ENCODE measurements at regions of chr1 and their contacts with region 1.

Region 1: DNA sequence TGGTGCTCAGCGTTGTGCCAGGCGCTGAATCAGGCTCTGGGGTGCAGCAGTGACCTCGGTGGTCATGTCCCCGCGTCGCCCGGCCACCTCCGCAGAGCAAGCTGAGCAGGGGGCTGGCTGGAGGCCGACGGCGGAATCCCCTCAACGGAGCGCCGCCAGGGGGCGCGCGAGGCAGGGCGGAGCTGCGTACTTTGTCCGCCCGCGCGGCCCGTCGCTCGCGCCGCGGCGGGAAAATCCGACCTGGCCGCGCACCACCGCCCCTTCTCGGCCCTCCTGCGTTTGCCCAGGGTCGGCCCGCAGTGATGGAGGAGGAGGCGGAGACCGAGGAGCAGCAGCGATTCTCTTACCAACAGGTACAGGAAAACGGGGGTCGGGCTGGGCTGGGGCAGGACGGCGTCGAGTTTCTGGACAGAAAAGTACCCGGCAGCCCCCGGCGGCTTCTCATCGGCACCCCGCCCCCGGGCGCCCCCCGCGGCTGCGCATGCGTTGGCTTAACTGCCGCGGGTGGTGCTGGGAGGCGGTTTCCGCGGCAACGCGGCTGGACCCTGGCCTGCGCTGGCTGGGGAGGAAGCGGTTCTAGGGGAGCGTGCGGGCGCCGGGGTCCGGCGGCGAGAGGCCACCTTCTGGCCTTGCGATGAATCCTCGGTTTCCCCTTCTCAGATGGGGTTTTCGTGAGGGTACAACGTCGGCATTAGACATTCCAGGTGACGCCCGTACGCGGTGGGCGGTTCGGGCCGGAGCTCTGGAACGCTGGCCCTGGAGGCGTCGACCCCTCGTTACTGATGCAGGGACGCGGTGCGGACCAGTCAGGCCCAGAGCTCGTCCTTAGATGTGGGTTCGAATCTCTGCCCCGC is at the start of gene CENPS:
- DNase-seq: peak; percentile 83 to 87 (median 84)
- H3K4me3 ChIP-seq: peak within 1 kb of the TSS; percentile 37 to 84 (median 67)
- H3K4me3 Mint-ChIP-seq: peak within 1 kb of the TSS; percentile 88 to 92
- H3K27ac ChIP-seq: peak within 1 kb of the TSS; percentile 41 to 54
- H3K27ac Mint-ChIP-seq: peak within 1 kb of the TSS; percentile 72 to 96 (median 91)
- H3K4me1 ChIP-seq: peaks cover 25 to 40% of the 10 kb centered on the region in 2 donors
- H3K4me1 Mint-ChIP-seq: peaks cover 33% of the 10 kb centered on the region
- H3K27me3 ChIP-seq: no peaks in the 10 kb centered on the region
- H3K27me3 Mint-ChIP-seq: peaks cover 0 to 5% (median 1%) of the 10 kb centered on the region in 3 donors
- CTCF ChIP-seq: peak; percentile 99
- polyA plus RNA-seq, gene CENPS: 0.48 to 3.5 (median 2.5) TPM

Region 2: GRCh38 chr1:9606948-9607347 is 823.5 kb before region 1 on chr1:
- intact Hi-C with region 1: no loop called
- DNase-seq: no peak
- H3K4me3 ChIP-seq: no peak overlapping the region
- H3K4me3 Mint-ChIP-seq: no peak overlapping the region
- H3K27ac ChIP-seq: no peak overlapping the region
- H3K27ac Mint-ChIP-seq: no peak overlapping the region
- H3K4me1 ChIP-seq: no peaks in the 10 kb centered on the region
- H3K4me1 Mint-ChIP-seq: no peaks in the 10 kb centered on the region
- H3K27me3 ChIP-seq: no peaks in the 10 kb centered on the region
- H3K27me3 Mint-ChIP-seq: peaks cover 0 to 1% (median 0%) of the 10 kb centered on the region in 3 donors
- CTCF ChIP-seq: no peak

Region 3: DNA sequence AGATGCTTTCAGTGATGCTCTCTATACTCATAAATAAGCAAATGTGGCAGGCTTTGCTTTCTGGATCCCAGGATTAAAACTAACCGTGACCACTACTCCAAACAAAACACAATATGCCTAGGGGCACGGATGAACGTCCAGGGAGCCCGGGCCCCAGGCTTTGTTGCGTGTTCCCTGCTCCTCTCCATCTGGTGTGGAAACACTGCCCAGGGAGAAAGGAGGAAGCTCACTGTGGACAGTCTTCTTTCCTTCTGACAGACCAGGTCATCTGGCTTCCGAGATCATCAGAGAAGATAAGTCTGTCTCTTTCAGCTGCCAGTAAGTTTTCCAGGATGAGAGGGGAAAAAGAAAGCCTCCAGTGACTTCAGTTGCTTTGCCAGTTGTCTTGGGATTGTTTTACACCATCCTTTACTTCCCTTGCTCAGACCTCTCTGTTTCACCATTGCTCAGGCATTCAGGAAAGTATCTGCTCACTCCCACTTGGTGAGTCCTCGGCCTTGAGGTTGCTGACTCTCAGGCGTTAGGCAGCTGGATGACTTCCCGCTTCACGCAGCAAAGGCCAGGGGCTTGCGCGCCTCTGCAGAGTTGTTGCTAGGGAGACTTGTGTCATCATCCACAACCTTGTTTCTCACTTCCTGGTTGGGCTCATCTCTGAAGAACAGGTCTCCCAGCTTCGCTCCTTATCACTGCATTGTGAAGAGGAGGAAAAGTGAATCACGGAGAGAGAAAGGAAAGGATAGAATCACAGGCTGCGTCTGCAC is 52.2 kb before region 1 on chr1:
- intact Hi-C with region 1: loop called (anchors 1 kb)
- DNase-seq: peak; percentile 82 to 90 (median 87)
- H3K4me3 ChIP-seq: peak overlapping the region in 1 of 3 experiments; percentile 15
- H3K4me3 Mint-ChIP-seq: peak overlapping the region in 1 of 2 donors; percentile 27
- H3K27ac ChIP-seq: peak overlapping the region; percentile 71 to 78
- H3K27ac Mint-ChIP-seq: peak overlapping the region; percentile 84 to 95 (median 93)
- H3K4me1 ChIP-seq: peaks cover 22 to 32% of the 10 kb centered on the region in 2 donors
- H3K4me1 Mint-ChIP-seq: peaks cover 36% of the 10 kb centered on the region
- H3K27me3 ChIP-seq: no peaks in the 10 kb centered on the region
- H3K27me3 Mint-ChIP-seq: peaks cover 0 to 2% (median 2%) of the 10 kb centered on the region in 3 donors
- CTCF ChIP-seq: no peak

Region 4: DNA sequence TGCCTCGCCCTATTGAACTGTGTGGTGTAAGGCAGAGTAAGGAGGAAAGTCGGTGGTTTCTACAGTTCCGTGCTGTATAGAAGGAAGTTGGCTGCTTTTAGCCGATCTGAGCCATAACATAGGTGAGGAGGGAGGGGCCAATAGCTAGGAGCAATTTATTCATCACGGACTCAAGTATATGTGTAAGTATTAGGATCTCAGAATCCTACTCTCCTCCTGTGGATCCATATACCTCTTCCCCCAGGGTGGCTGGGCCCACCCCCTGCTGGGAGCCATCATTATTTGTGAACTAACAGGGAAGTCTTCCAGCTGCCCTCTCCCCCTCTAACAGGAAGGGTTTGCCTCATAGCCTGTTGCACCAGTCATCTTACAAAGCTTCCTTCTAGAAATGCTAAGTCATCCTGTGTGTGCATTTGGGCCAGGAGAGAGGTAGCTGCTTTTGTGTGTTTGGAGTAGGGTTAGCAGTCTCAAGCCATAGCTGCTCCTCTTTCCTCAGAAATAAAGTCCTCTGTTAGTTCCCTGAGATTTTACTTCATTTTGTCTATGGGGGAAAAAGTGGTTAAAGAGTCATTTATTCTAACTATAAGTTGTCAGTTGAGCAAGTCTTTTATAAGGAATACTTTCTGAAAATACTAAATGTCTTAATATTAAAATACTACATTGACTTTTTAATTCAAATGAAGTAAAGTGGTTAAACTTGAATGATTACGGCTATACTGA is 15.1 kb before region 1 on chr1:
- intact Hi-C with region 1: loop called in 1 of 2 experiments (anchors 2 kb)
- DNase-seq: peak; percentile 78 to 92 (median 91)
- H3K4me3 ChIP-seq: peak overlapping the region in 2 of 3 experiments; percentile 34 to 61
- H3K4me3 Mint-ChIP-seq: peak overlapping the region; percentile 68 to 87
- H3K27ac ChIP-seq: peak overlapping the region; percentile 76 to 88
- H3K27ac Mint-ChIP-seq: peak overlapping the region; percentile 93 to 99 (median 97)
- H3K4me1 ChIP-seq: peaks cover 33 to 42% of the 10 kb centered on the region in 2 donors
- H3K4me1 Mint-ChIP-seq: peaks cover 33% of the 10 kb centered on the region
- H3K27me3 ChIP-seq: no peaks in the 10 kb centered on the region
- H3K27me3 Mint-ChIP-seq: no peaks in the 10 kb centered on the region
- CTCF ChIP-seq: peak; percentile 11

Region 5: DNA sequence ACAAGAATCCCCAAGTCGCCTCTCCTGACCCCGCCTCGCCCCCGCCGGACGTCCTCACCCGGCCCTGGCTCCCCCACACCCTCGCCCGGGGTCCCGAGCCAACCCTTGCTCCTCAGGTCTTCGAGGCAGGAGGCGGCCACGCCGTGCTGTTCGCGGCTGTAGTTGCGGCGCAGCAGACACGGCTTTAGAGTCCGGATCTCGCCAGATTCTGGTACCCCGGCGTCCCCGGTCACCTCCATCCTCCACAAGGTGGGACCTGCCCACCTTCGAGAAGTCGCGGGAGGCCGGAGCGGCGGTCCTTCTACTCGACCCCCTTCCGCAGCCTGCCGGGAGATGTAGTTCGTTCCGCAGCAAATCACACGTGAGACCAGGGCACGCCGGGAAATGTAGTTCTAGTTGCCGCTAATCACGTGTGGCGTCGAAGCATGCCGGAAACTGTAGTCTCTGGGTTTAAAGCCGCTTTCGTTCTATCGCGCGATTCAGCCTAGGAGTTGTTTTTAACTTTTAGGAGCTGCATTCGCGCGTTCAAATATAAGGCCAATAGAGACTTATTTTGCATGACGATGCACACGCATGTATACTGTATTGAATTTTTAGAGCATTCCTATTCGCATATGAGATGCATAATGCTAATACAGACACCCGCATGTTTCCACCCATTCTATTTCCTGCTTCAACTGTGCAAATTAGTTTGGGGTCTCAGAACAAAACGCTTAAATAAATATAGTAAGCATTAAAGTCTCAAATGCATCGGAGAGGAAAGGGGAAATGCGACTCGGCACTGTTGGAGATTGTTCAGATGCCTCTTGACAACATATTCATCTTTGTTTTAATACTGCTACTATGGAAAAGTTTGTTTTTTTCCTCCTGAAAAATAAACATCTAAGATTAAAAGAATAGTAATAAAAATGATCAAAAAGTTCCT is 42.0 kb after region 1 on chr1 and contains the start of gene DFFA:
- intact Hi-C with region 1: loop called (anchors 2 to 5 kb)
- DNase-seq: peak; percentile 86 to 90 (median 86)
- H3K4me3 ChIP-seq: peak within 1 kb of the TSS; percentile 42 to 93 (median 85)
- H3K4me3 Mint-ChIP-seq: peak within 1 kb of the TSS; percentile 90 to 91
- H3K27ac ChIP-seq: peak within 1 kb of the TSS in 1 of 2 donors; percentile 65
- H3K27ac Mint-ChIP-seq: peak within 1 kb of the TSS in 6 of 7 donors; percentile 53 to 92 (median 79)
- H3K4me1 ChIP-seq: peaks cover 40 to 52% of the 10 kb centered on the region in 2 donors
- H3K4me1 Mint-ChIP-seq: peaks cover 44% of the 10 kb centered on the region
- H3K27me3 ChIP-seq: no peaks in the 10 kb centered on the region
- H3K27me3 Mint-ChIP-seq: no peaks in the 10 kb centered on the region
- CTCF ChIP-seq: no peak
- polyA plus RNA-seq, gene DFFA: 11.0 to 17.8 (median 17.3) TPM

Region 6: GRCh38 chr1:10494754-10495474 is 64.5 kb after region 1 on chr1:
- intact Hi-C with region 1: loop called (anchors 1 to 5 kb)
- DNase-seq: peak; percentile 53 to 64 (median 54)
- H3K4me3 ChIP-seq: peak overlapping the region; percentile 39 to 71 (median 39)
- H3K4me3 Mint-ChIP-seq: peak overlapping the region; percentile 76 to 89
- H3K27ac ChIP-seq: peak overlapping the region in 1 of 2 donors; percentile 72
- H3K27ac Mint-ChIP-seq: peak overlapping the region; percentile 34 to 90 (median 75)
- H3K4me1 ChIP-seq: peaks cover 9 to 15% of the 10 kb centered on the region in 2 donors
- H3K4me1 Mint-ChIP-seq: peaks cover 14% of the 10 kb centered on the region
- H3K27me3 ChIP-seq: no peaks in the 10 kb centered on the region
- H3K27me3 Mint-ChIP-seq: peaks cover 0 to 2% (median 0%) of the 10 kb centered on the region in 3 donors
- CTCF ChIP-seq: peak; percentile 99

Region 7: DNA sequence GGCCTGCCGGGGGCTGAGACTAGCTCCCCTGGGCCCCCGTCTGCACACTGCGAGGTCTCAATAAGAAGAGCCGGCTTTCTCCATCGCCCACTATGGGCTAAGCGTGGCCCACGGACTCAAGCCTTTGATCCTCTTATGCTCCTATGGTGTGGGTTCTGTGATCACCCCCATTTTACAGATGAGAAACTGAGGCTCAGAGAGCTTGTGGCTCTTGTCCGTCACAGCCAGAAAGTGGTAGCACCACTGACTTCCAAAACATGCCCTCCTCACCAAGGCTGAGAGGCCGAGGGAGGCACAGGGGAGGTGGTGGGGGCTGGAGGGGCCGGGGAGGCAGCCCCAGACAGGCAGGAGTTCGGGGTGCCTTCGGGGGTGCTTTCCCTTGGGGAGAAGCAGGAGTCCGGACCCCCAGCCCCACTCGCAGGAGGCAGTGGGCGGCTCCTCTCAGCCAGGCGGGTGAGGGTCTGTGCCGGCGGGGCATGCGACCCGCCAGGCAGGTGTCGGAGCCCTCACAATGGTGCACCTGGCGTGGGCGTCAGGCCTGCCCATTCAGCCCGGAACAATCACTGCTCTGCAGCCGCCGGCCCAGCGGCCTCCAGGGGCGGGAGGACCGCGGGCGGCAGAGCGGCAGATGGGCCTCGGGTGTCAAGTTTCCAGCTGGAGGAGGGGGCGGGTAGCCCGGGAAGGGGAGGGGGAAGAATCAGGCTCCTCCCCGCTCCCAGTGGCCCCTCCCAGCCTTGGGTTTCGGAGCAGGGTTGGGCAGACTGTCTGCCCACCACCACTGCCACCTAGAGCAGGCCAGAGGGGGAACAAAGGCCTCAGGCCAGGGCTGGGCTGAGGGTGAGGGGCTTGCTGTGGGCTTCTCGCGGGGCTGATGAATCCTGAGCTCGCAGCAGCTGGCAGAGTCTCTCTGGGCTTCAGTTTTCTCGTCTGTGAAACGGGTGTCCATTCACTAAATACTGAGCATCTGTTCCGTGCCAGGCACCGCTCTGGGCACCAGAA is 405.3 kb after region 1 on chr1:
- intact Hi-C with region 1: no loop called
- DNase-seq: no peak
- H3K4me3 ChIP-seq: no peak overlapping the region
- H3K4me3 Mint-ChIP-seq: peak overlapping the region in 1 of 2 donors; percentile 40
- H3K27ac ChIP-seq: no peak overlapping the region
- H3K27ac Mint-ChIP-seq: no peak overlapping the region
- H3K4me1 ChIP-seq: no peaks in the 10 kb centered on the region
- H3K4me1 Mint-ChIP-seq: peaks cover 5% of the 10 kb centered on the region
- H3K27me3 ChIP-seq: peaks cover 7 to 30% of the 10 kb centered on the region in 2 donors
- H3K27me3 Mint-ChIP-seq: peaks cover 34 to 44% (median 36%) of the 10 kb centered on the region in 3 donors
- CTCF ChIP-seq: no peak